A673 (cell line): ENCODE measurements at regions of chrX and their contacts with region 1.

Region 1: DNA sequence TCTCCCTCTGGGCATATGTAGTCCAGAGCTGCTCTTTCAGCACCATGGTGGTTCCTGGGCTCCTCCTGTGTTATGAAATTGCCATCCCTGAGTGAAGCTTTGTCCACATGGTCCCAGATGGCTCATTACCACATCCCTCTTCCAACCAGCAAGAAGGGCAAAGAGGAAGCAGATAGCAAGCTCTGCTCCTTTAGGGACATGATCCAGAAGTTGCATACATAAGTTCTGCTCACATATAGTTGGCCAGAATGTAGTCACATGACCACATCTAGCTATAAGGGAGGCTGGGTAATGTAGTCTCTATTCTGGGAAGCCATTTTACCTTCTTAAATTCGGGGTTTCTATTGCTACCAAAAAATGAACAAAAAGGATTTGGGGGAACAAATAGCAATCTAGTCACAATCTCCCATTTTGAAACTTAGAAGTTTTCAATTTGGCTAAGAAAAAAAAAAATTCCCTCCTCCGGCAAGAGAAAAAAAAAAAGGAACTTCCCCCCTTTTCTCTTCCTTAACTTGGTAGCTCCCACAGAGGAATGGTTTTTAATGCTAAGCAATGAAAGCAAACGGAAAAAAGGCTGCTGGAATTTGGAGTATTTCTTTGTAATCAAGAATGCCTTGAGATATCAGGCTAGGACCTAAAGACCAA is 88.2 kb upstream of the USP9X start:
- DNase-seq: peak; percentile 78
- H3K4me3 ChIP-seq: peak overlapping the region; percentile 13
- H3K27ac ChIP-seq: peak overlapping the region; percentile 58
- H3K4me1 ChIP-seq: peaks cover 4% of the 10 kb centered on the region
- H3K27me3 ChIP-seq: no peaks in the 10 kb centered on the region
- CTCF ChIP-seq: no peak

Region 2: GRCh38 chrX:39633293-39633692 is 1363.7 kb before region 1 on chrX:
- CTCF ChIA-PET with region 1: no interaction called
- POLR2A ChIA-PET with region 1: no interaction called
- intact Hi-C with region 1: no loop called
- DNase-seq: no peak
- H3K4me3 ChIP-seq: no peak overlapping the region
- H3K27ac ChIP-seq: no peak overlapping the region
- H3K4me1 ChIP-seq: no peaks in the 10 kb centered on the region
- H3K27me3 ChIP-seq: no peaks in the 10 kb centered on the region
- CTCF ChIP-seq: no peak

Region 3: DNA sequence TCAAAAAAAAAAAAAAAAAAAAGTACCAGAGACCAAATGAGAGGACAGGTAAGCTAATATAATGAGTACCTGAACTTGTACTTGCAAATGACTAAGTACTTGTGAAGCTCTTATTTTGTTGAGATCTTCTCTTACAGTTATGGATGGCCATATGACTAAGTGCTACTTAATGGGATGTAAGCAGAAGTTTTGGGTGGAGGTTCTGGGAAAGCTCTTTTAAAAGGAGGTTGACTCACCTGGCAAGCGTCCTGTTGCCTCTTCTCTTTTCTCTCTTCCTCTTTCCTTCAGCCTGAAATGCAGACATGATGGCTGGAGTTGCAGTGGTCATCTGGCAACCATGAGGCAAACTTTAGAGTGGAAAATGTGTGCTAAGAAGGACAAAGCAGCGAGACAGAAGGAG is 224.7 kb before region 1 on chrX:
- CTCF ChIA-PET with region 1: no interaction called
- POLR2A ChIA-PET with region 1: interaction called, 10 read pairs
- intact Hi-C with region 1: no loop called
- DNase-seq: no peak
- H3K4me3 ChIP-seq: no peak overlapping the region
- H3K27ac ChIP-seq: no peak overlapping the region
- H3K4me1 ChIP-seq: no peaks in the 10 kb centered on the region
- H3K27me3 ChIP-seq: no peaks in the 10 kb centered on the region
- CTCF ChIP-seq: no peak